HCT116 (cell line): ENCODE measurements at regions of chr11 and their contacts with region 1.

Region 1: DNA sequence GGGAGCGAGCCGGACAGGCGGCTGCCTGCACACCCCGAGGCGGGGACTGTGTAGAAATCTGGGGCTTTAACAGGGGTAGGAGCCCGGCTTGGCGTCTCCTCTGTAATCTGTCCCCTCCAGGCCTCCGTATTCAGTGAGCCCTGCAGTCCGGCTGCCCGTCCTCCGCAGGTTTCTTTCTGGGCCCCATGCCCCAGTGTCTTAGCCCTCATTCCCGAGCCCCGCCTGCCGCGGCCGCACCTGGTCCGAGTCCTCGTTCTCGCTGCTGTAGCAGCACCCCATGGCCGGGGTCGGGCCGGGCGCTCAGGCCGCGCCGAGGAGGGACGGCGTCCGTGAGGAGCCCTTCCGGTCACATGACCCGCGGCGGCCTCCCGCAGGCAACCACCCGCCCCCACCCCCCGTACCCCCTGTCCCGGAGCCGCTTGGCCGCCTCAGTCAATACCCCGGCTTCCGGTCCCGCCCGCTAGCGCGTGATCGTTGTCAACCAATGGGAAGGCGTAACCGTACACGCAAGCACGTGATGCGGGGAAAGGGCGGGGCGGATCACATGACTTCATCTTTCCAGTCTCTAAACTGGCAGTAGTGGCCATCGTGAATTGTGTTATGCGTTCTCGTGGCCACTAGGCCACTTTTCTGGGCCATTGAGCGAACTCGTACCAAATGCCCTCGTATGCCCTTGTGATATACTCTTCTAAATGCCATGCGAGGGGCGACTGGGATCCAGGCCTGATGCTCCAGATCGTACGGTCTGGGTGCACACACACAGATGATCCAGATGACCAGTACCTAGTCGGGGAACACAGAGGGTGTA is at the start of gene LAMTOR1:
- DNase-seq: peak; percentile 98
- ATAC-seq: peak; percentile 95
- H3K4me3 ChIP-seq: peak within 1 kb of the TSS; percentile 89 to 99
- H3K27ac ChIP-seq: peak within 1 kb of the TSS; percentile 80
- H3K4me1 ChIP-seq: peaks cover 11 to 18% of the 10 kb centered on the region in 2 experiments; a peak in 3 of 4 replicates
- H3K27me3 ChIP-seq: no peaks in the 10 kb centered on the region
- CTCF ChIP-seq: peak in 2 of 3 experiments; percentile 28 to 41; a peak in 1 of 6 replicates
- POLR2A ChIP-seq: no peak
- RAD21 ChIP-seq: no peak
- total RNA-seq, gene LAMTOR1: 63.9 TPM

Region 2: GRCh38 chr11:72080256-72080974 is 22.7 kb before region 1 on chr11 and contains the starts of genes LRRC51 and NUMA1:
- CTCF ChIA-PET with region 1: no interaction called
- POLR2A ChIA-PET with region 1: no interaction called
- RAD21 ChIA-PET with region 1: interaction called in 1 of 2 experiments, 5 read pairs
- intact Hi-C with region 1: loop called (anchors 1 kb)
- DNase-seq: peak; percentile 100
- ATAC-seq: peak; percentile 94
- H3K4me3 ChIP-seq: peak within 1 kb of the TSS; percentile 89 to 92
- H3K27ac ChIP-seq: peak within 1 kb of the TSS; percentile 68
- H3K4me1 ChIP-seq: peaks cover 2 to 31% of the 10 kb centered on the region in 2 experiments; a peak in 3 of 4 replicates
- H3K27me3 ChIP-seq: no peaks in the 10 kb centered on the region
- CTCF ChIP-seq: no peak
- POLR2A ChIP-seq: peak; percentile 40
- RAD21 ChIP-seq: no peak
- total RNA-seq, gene LRRC51: 10.8 TPM
- total RNA-seq, gene NUMA1: 133 TPM

Region 3: GRCh38 chr11:72222907-72223614 is 119.9 kb after region 1 on chr11:
- CTCF ChIA-PET with region 1: no interaction called
- POLR2A ChIA-PET with region 1: no interaction called
- RAD21 ChIA-PET with region 1: no interaction called
- intact Hi-C with region 1: loop called (anchors 5 kb)
- DNase-seq: peak; percentile 76
- ATAC-seq: peak; percentile 81
- H3K4me3 ChIP-seq: peak overlapping the region; percentile 88 to 94
- H3K27ac ChIP-seq: peak overlapping the region; percentile 79
- H3K4me1 ChIP-seq: peaks cover 17 to 32% of the 10 kb centered on the region in 2 experiments
- H3K27me3 ChIP-seq: no peaks in the 10 kb centered on the region
- CTCF ChIP-seq: no peak
- POLR2A ChIP-seq: no peak
- RAD21 ChIP-seq: no peak

Region 4: DNA sequence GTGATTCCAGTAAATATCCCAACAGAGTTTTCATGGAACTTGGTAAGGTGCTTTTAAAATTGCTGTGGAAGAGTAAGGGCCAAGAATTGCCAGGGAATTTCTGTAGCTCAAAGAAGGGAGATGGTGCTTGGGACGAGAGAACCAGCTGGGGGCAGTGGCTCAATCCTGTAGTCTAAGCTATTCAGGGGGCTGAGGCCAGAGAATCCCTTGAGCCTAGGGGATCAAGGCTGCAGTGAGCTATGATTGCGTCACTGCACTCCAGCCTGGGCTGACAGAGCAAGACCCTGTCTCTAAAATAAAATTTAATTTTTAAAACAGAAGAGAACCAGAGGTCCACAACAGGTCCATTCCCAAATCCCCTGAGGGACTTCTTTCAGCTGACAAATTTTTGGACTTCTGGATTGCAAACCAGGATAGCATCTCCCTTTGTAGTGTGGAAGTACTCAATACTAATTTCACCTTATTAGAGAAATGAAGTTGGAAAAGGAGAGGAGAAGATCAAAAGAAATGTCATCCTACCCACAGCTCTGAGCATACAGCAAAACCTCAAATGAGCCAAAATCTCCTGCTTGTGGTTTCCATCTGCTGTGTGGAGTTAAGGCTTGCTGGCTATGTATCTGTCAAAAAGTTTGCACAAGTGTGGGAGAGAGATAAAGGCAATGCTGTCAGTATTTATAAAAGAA is 390.4 kb after region 1 on chr11:
- CTCF ChIA-PET with region 1: no interaction called
- POLR2A ChIA-PET with region 1: no interaction called
- RAD21 ChIA-PET with region 1: no interaction called
- intact Hi-C with region 1: no loop called
- DNase-seq: no peak
- ATAC-seq: no peak
- H3K4me3 ChIP-seq: no peak overlapping the region
- H3K27ac ChIP-seq: no peak overlapping the region
- H3K4me1 ChIP-seq: no peaks in the 10 kb centered on the region
- H3K27me3 ChIP-seq: no peaks in the 10 kb centered on the region
- CTCF ChIP-seq: no peak
- POLR2A ChIP-seq: no peak
- RAD21 ChIP-seq: no peak